Activated B cell treated with CpG ODN at 0.5 μM for 24 hours (primary cell): ENCODE measurements at regions of chr1 and their contacts with region 1.

Region 1: GRCh38 chr1:9874959-9875635 is 35.0 kb downstream of the CTNNBIP1 start:
- DNase-seq: peak; percentile 59
- ATAC-seq: peak; percentile 97
- H3K4me3 Mint-ChIP-seq: no peak overlapping the region
- H3K27ac Mint-ChIP-seq: peak overlapping the region; percentile 11
- H3K4me1 Mint-ChIP-seq: peaks cover 5% of the 10 kb centered on the region
- H3K27me3 Mint-ChIP-seq: no peaks in the 10 kb centered on the region
- CTCF ChIP-seq: no peak

Region 2: DNA sequence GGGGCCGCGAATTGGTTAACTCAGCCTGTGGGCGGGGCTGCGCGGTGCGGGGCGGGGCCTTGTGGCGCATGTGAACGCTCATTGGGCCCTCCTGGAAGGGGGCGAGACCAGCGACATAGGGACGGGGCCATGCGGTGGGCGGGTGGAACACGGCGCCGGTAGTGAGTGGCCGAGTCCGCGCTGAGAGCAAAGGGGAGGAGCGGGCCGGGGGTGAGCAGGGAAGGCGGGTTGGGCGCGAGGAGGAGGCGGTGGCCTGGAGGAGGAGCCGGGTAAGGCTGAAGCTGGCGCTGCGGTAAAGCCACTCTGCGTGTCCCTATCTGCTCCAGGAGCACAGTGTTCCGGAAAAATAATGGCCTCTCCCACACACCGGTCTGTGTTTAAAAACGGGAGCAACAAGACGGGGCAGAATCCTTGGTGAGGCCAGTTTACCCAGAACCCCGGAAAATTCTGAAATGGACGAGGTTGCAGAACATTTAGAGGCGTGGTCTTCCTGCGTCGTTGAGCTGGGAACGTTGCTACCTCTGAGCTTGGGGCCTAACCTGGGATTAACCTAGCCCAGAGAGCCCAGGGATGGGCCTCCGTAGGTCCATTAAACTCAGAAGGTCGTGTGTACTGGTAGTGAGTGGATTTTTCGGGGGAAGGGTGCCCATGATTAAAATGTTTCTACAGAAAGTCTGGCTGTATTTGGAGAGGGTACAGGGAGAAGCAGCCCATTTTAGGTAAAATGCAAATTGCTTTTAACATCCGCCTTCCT is 35.5 kb after region 1 on chr1:
- CTCF ChIA-PET with region 1: interaction called, 3 read pairs
- POLR2A ChIA-PET with region 1: no interaction called
- intact Hi-C with region 1: loop called (anchors 1 kb)
- DNase-seq: no peak
- ATAC-seq: peak; percentile 90
- H3K4me3 Mint-ChIP-seq: peak overlapping the region; percentile 97
- H3K27ac Mint-ChIP-seq: peak overlapping the region; percentile 99
- H3K4me1 Mint-ChIP-seq: peaks cover 22% of the 10 kb centered on the region
- H3K27me3 Mint-ChIP-seq: no peaks in the 10 kb centered on the region
- CTCF ChIP-seq: no peak

Region 3: GRCh38 chr1:9960706-9961562 is 85.8 kb after region 1 on chr1:
- CTCF ChIA-PET with region 1: no interaction called
- POLR2A ChIA-PET with region 1: no interaction called
- intact Hi-C with region 1: no loop called
- DNase-seq: peak; percentile 50
- ATAC-seq: peak; percentile 99
- H3K4me3 Mint-ChIP-seq: peak overlapping the region; percentile 44
- H3K27ac Mint-ChIP-seq: peak overlapping the region; percentile 75
- H3K4me1 Mint-ChIP-seq: peaks cover 15% of the 10 kb centered on the region
- H3K27me3 Mint-ChIP-seq: no peaks in the 10 kb centered on the region
- CTCF ChIP-seq: no peak

Region 4: DNA sequence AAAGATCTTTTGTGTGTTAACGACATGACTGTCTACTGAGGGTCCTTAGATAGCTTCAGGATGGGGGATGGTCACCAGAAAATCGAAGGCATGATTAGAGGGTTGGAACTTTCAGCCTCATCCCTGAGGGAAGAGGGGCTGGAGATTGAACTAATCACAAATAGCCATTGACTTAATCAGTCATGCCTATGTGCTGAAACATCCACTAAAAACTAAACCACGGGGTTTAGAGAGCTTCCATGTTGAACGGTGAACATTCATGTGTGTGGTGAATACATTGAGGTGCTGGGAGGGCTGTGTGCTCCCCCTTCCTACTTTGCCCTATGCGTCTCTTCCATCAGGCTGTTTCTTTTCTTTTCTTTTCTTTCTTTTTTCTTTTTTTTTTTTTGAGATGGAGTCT is 138.9 kb after region 1 on chr1:
- CTCF ChIA-PET with region 1: no interaction called
- POLR2A ChIA-PET with region 1: no interaction called
- intact Hi-C with region 1: no loop called
- DNase-seq: no peak
- ATAC-seq: no peak
- H3K4me3 Mint-ChIP-seq: no peak overlapping the region
- H3K27ac Mint-ChIP-seq: no peak overlapping the region
- H3K4me1 Mint-ChIP-seq: peaks cover 3% of the 10 kb centered on the region
- H3K27me3 Mint-ChIP-seq: no peaks in the 10 kb centered on the region
- CTCF ChIP-seq: no peak

Region 5: DNA sequence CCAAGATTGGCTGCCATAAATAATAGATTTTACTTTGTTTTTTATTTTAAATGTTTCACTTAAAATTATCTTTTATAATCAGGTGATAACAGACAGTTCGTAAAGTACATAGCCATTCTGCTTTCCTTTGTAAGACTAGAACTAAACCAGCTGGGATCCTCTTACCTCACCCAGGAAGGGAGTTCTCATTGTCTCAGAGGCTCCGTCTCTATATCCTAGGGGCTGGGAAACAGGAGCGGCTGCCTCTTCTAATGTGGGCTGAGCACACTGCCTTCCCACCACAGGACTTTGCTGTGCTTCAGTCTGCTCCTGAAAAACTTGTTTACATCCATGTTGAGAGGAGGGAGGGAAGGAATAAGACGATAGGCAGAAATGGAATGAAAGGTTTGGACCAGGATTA is 478.2 kb after region 1 on chr1:
- CTCF ChIA-PET with region 1: no interaction called
- POLR2A ChIA-PET with region 1: no interaction called
- intact Hi-C with region 1: loop called (anchors 10 kb)
- DNase-seq: no peak
- ATAC-seq: no peak
- H3K4me3 Mint-ChIP-seq: no peak overlapping the region
- H3K27ac Mint-ChIP-seq: no peak overlapping the region
- H3K4me1 Mint-ChIP-seq: no peaks in the 10 kb centered on the region
- H3K27me3 Mint-ChIP-seq: no peaks in the 10 kb centered on the region
- CTCF ChIP-seq: no peak